Activated B cell treated with CpG ODN at 0.5 μM for 24 hours (primary cell): ENCODE measurements at regions of chr9 and their contacts with region 1.

Region 1: GRCh38 chr9:37066139-37066725 is 32.2 kb upstream of the PAX5 start:
- DNase-seq: peak; percentile 20
- ATAC-seq: peak; percentile 91
- H3K4me3 Mint-ChIP-seq: peak overlapping the region; percentile 21
- H3K27ac Mint-ChIP-seq: peak overlapping the region; percentile 76
- H3K4me1 Mint-ChIP-seq: peaks cover 44% of the 10 kb centered on the region
- H3K27me3 Mint-ChIP-seq: no peaks in the 10 kb centered on the region
- CTCF ChIP-seq: no peak

Region 2: GRCh38 chr9:37053684-37054362 is 12.4 kb before region 1 on chr9:
- CTCF ChIA-PET with region 1: no interaction called
- POLR2A ChIA-PET with region 1: interaction called, 4 read pairs
- intact Hi-C with region 1: loop called (anchors 2 kb)
- DNase-seq: no peak
- ATAC-seq: no peak
- H3K4me3 Mint-ChIP-seq: no peak overlapping the region
- H3K27ac Mint-ChIP-seq: no peak overlapping the region
- H3K4me1 Mint-ChIP-seq: peaks cover 19% of the 10 kb centered on the region
- H3K27me3 Mint-ChIP-seq: no peaks in the 10 kb centered on the region
- CTCF ChIP-seq: no peak